Sciatic nerve (tissue), 2 donors: ENCODE measurements at regions of chr13 and their contacts with region 1.

Region 1: GRCh38 chr13:93674337-93674755 is 447.7 kb downstream of the GPC6 start:
- DNase-seq: no peak
- ATAC-seq: no peak

Region 2: DNA sequence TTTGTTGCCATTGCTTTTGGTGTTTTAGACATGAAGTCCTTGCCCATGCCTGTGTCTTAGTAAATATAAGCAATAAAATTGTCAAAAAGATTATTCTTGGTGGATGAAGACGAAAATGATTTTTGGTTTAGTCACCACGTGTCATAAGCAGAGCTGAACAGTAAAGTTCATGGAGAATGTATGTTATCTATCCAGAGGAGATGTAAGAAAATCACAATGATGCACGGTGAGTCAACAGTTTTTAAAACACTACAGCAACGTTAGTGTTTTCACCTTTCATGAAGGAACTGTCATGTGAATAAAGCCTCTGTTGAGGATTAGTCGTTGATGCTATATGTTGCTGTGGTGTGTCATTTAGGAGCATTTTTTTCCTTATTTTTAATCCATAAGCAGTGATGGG is 310.2 kb before region 1 on chr13:
- intact Hi-C with region 1: no loop called
- DNase-seq: no peak
- ATAC-seq: no peak

Region 3: GRCh38 chr13:93635616-93636032 is 38.7 kb before region 1 on chr13:
- intact Hi-C with region 1: no loop called
- DNase-seq: no peak
- ATAC-seq: peak; percentile 97

Region 4: GRCh38 chr13:94251831-94252608 is 577.7 kb after region 1 on chr13:
- intact Hi-C with region 1: loop called (anchors 5 kb)
- DNase-seq: no peak
- ATAC-seq: peak; percentile 62